Aorta (tissue), 5 donors: ENCODE measurements at regions of chr1 and their contacts with region 1.

Region 1: GRCh38 chr1:170670802-170671628 is 7.1 kb downstream of the PRRX1 start:
- DNase-seq: peak in 1 of 2 donors; percentile 94
- ATAC-seq: peak; percentile 66
- H3K4me3 ChIP-seq: no peak overlapping the region
- H3K27ac ChIP-seq: no peak overlapping the region
- H3K4me1 ChIP-seq: no peaks in the 10 kb centered on the region
- H3K27me3 ChIP-seq: no peaks in the 10 kb centered on the region

Region 2: DNA sequence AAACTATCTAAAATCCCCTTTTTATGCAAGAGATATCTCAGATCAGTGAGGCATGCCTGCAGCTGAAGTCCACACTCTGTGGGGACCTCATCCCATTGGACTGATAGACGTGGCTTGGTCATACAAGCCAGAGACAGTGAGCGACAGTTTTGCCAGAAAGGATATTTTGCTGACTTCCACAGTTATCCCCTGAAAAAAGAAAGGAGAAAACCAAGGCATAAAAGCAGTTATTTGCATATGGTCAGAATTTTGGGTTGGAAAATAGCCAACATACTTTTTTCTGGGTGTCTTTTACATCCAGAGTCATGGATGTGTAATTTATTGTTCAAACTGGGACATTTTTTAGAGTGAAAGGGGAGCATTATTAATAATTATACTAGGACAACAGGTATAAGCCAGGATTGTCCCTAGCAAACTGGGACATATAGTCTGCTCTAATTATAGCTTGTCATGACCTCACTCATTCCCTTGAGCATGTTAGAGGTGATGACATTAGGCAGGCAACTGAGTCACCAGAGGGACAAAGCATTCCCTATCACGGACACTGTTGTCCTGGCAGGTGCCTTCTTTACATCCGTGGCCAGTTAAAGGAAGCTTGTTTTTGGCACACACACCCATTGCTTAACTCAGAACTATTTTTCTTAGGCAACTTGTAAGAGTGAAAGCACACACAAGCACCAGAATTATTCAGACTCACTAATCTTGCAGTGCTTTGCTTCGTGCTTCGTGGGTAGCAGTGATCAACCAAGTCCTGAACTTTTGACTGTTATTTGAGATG is 58.4 kb after region 1 on chr1:
- intact Hi-C with region 1: loop called in 1 of 2 experiments (anchors 10 kb)
- DNase-seq: no peak
- ATAC-seq: peak; percentile 59
- H3K4me3 ChIP-seq: no peak overlapping the region
- H3K27ac ChIP-seq: no peak overlapping the region
- H3K4me1 ChIP-seq: peaks cover 1 to 7% of the 10 kb centered on the region in 2 donors
- H3K27me3 ChIP-seq: no peaks in the 10 kb centered on the region

Region 3: DNA sequence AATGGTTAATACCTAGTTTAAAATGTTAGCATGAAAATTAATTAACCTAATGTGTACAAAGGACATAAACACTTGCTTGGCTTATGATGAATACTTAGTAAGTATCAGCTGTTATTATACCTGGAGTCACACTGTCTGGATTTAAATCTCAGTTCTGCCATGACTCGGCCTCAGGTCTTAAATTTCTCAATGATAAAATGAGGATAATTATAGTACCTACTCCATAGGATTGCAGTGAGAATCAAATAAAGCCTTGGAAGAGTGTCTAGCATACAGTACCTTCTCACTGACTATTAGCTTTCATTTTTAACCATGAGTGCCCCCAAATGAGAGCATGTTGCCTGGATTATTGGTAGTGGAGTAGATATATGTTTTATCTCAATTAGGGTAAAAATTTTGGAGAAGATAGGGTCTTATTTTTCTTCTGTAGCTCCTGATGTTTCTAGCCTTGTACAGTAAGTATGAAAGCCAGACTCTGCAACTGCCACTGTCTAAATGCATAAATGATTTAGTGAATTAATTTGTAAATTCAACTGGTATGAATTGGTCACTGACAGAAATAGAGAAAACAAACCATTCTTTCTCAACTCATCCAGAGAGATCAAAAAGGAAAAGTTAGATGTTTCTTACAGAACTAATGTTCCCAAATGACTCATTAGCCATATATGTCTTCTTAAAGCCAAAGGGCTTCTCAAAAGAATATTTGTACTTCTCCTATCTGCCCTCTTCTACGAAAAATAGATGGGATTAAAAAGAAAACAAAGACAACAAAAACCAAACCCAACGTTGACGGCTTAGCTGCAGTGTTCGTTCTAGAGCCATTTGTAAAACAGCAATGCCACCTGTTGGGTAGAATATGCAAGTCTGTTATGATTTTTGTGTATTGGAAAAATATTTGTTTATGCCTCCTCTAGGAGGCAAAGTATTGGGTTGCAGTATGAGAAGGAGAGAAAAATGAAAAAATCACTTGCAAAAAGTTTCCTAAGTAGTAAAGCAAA is 210.6 kb after region 1 on chr1:
- intact Hi-C with region 1: loop called (anchors 5 to 10 kb)
- DNase-seq: no peak
- ATAC-seq: peak; percentile 82
- H3K4me3 ChIP-seq: no peak overlapping the region
- H3K27ac ChIP-seq: no peak overlapping the region
- H3K4me1 ChIP-seq: no peaks in the 10 kb centered on the region
- H3K27me3 ChIP-seq: no peaks in the 10 kb centered on the region